A549 (cell line): ENCODE measurements at regions of chr16 and their contacts with region 1.

Region 1: GRCh38 chr16:67667817-67668494 is 1.3 kb downstream of the C16orf86 start:
- DNase-seq: peak; percentile 93 to 98
- ATAC-seq: peak; percentile 86 to 92
- H3K4me3 ChIP-seq: no peak overlapping the region
- H3K27ac ChIP-seq: peak overlapping the region in 1 of 2 experiments; percentile 55; a peak in 3 of 6 replicates
- H3K4me1 ChIP-seq: peaks cover 17% of the 10 kb centered on the region
- CTCF ChIP-seq: peak; percentile 69
- EP300 ChIP-seq: no peak
- POLR2A ChIP-seq: no peak
- RAD21 ChIP-seq: peak; percentile 57 to 65

Region 2: DNA sequence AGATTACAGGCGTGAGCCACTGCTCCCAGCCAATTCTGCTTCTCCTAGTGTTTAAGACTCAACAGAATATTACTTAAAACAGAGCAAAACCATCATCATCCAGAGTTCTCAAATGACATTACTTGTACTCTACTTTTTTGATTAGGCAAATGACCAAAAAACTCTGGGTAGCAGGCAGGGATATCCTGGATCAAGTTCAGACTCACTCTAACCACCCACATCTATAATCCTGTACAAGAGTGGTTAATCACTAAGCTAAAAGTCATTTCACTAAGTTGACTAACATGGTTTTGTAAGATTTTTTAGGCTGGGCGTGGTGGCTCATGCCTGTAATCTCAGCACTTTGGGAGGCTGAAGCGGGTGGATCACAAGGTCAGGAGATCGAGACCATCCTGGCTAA is 844.0 kb before region 1 on chr16:
- CTCF ChIA-PET with region 1: no interaction called
- POLR2A ChIA-PET with region 1: no interaction called
- DNase-seq: no peak
- ATAC-seq: no peak
- H3K4me3 ChIP-seq: no peak overlapping the region
- H3K27ac ChIP-seq: no peak overlapping the region
- H3K4me1 ChIP-seq: peaks cover 8% of the 10 kb centered on the region; the same call in 1 of the 3 replicates
- CTCF ChIP-seq: no peak
- EP300 ChIP-seq: no peak
- POLR2A ChIP-seq: no peak
- RAD21 ChIP-seq: no peak

Region 3: GRCh38 chr16:67514382-67514828 is 153.6 kb before region 1 on chr16:
- CTCF ChIA-PET with region 1: interaction called, 174 read pairs
- POLR2A ChIA-PET with region 1: no interaction called
- DNase-seq: peak; percentile 69 to 89
- ATAC-seq: peak; percentile 82 to 86
- H3K4me3 ChIP-seq: no peak overlapping the region
- H3K27ac ChIP-seq: peak overlapping the region; percentile 15 to 43; a peak in 4 of 6 replicates
- H3K4me1 ChIP-seq: peaks cover 30% of the 10 kb centered on the region
- CTCF ChIP-seq: peak; percentile 79
- EP300 ChIP-seq: no peak
- POLR2A ChIP-seq: no peak
- RAD21 ChIP-seq: peak; percentile 71

Region 4: GRCh38 chr16:67530013-67530939 is 137.7 kb before region 1 on chr16:
- CTCF ChIA-PET with region 1: interaction called, 14 read pairs
- POLR2A ChIA-PET with region 1: no interaction called
- DNase-seq: no peak
- ATAC-seq: peak; percentile 17 to 60; a peak in 3 of 6 replicates
- H3K4me3 ChIP-seq: peak overlapping the region; percentile 73
- H3K27ac ChIP-seq: peak overlapping the region; percentile 81 to 93
- H3K4me1 ChIP-seq: peaks cover 43% of the 10 kb centered on the region
- CTCF ChIP-seq: no peak
- EP300 ChIP-seq: no peak
- POLR2A ChIP-seq: no peak
- RAD21 ChIP-seq: no peak

Region 5: DNA sequence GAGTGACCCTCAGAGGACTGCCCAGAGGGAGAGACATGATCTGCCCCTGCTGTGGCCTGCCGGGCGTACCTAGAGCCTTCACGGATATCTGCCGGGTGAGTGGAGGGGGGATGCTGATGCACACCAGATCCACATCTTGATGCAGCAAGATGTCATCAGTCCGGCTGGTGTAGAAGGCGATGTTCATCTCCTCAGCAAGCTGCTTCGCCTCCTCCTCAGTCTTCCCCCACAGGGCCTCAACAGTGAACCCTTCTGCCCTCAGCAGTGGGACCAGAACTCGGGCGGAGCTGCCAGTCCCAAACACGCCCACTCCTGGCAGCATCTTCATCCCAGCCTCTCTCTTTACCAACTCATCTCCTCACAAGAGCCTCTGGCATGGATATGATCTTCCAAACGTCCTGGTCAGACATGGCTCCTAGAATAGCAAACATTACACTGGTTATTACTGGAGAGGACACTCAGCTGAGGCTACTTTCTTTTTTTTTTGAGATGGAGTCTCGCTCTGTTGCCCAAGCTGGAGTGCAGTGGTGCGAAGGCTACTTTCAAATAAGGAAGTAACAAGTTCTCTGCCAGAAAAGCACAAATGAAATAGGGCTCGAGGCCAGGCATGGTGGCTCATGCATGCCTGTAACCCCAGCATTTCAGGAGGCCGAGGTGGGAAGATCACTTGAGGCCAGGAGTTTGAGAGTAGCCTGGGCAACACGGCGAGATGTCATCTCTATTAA is 17.6 kb after region 1 on chr16:
- CTCF ChIA-PET with region 1: interaction called, 36 read pairs
- POLR2A ChIA-PET with region 1: no interaction called
- DNase-seq: no peak
- ATAC-seq: no peak
- H3K4me3 ChIP-seq: no peak overlapping the region
- H3K27ac ChIP-seq: no peak overlapping the region
- H3K4me1 ChIP-seq: no peaks in the 10 kb centered on the region
- CTCF ChIP-seq: no peak
- EP300 ChIP-seq: no peak
- POLR2A ChIP-seq: no peak
- RAD21 ChIP-seq: no peak